ENCODE measurements at regions of chr15 and their contacts with region 1.

Region 1: DNA sequence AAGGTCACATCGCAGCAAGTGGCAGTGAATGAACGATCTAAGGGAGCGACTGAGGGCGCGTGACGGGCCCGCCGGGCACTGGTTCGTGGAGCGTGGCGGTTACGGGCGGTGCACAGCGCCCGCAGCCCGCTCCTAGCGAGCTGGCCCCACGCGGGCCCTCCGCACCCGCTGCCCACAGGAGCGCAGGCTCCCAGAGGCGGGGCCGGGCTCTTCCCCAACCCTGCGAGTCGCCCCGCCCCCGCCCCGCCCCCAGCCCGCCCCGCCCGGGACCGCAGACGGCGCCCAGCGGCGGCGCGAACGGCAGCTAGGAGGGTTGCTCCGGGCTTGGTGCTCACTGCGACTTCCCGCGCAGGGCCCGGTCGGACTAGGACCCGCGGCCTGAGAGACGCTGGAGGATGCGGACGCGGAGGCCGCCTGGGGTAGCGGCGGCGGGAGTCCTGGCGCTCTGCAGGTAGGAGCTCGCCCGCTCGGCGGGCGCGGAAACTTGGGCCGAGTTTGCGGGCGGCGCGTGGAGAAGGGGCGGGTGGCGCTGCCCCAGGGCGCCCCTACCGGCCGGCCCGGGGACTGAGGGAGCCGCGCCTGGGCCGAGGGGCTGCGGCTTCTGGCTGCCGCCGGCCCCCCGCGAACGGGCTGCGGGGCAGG is at the start of gene C15orf39:
- DNase-seq: peak; percentile 76 to 91 (median 81)
- ATAC-seq: peak; percentile 32 to 83 (median 66)
- H3K4me3 ChIP-seq: peak within 1 kb of the TSS; percentile 61 to 100 (median 89)
- H3K27ac ChIP-seq: peak within 1 kb of the TSS; percentile 92 to 99 (median 97)
- H3K4me1 ChIP-seq: peaks cover 0 to 78% (median 55%) of the 10 kb centered on the region in 12 donors
- H3K27me3 ChIP-seq: no peaks in the 10 kb centered on the region
- CTCF ChIP-seq: peak; percentile 71 to 97 (median 94)
- POLR2A ChIP-seq: peak; percentile 84 to 96
- total RNA-seq, gene C15orf39: 10.0 to 26.1 (median 13.9) TPM

Region 2: GRCh38 chr15:74937596-74938296 is 264.0 kb before region 1 on chr15 and contains the start of gene COX5A:
- intact Hi-C with region 1: loop called in 1 of 10 experiments (anchors 5 kb)
- DNase-seq: peak; percentile 95 to 97 (median 96)
- ATAC-seq: peak; percentile 92 to 99 (median 96)
- H3K4me3 ChIP-seq: peak within 1 kb of the TSS; percentile 67 to 100 (median 96)
- H3K27ac ChIP-seq: peak within 1 kb of the TSS; percentile 93 to 99 (median 99)
- H3K4me1 ChIP-seq: peaks cover 0 to 45% (median 34%) of the 10 kb centered on the region in 12 donors
- H3K27me3 ChIP-seq: no peaks in the 10 kb centered on the region
- CTCF ChIP-seq: peak in 1 of 12 donors; percentile 5
- POLR2A ChIP-seq: peak in 1 of 2 donors; percentile 92
- total RNA-seq, gene COX5A: 754 to 1,537 (median 1,120) TPM

Region 3: GRCh38 chr15:74956648-74957300 is 245.0 kb before region 1 on chr15 and contains the start of gene RPP25:
- intact Hi-C with region 1: loop called in 3 of 10 experiments (anchors 10 kb)
- DNase-seq: peak; percentile 74 to 90 (median 78)
- ATAC-seq: peak; percentile 73 to 91 (median 88)
- H3K4me3 ChIP-seq: peak within 1 kb of the TSS; percentile 23 to 73 (median 58)
- H3K27ac ChIP-seq: peak within 1 kb of the TSS; percentile 47 to 85 (median 76)
- H3K4me1 ChIP-seq: peaks cover 0 to 58% (median 37%) of the 10 kb centered on the region in 12 donors
- H3K27me3 ChIP-seq: peaks cover 0 to 27% (median 10%) of the 10 kb centered on the region in 9 donors
- CTCF ChIP-seq: no peak
- POLR2A ChIP-seq: peak in 1 of 2 donors; percentile 82
- total RNA-seq, gene RPP25: 1.1 to 5.8 (median 2.1) TPM

Region 4: DNA sequence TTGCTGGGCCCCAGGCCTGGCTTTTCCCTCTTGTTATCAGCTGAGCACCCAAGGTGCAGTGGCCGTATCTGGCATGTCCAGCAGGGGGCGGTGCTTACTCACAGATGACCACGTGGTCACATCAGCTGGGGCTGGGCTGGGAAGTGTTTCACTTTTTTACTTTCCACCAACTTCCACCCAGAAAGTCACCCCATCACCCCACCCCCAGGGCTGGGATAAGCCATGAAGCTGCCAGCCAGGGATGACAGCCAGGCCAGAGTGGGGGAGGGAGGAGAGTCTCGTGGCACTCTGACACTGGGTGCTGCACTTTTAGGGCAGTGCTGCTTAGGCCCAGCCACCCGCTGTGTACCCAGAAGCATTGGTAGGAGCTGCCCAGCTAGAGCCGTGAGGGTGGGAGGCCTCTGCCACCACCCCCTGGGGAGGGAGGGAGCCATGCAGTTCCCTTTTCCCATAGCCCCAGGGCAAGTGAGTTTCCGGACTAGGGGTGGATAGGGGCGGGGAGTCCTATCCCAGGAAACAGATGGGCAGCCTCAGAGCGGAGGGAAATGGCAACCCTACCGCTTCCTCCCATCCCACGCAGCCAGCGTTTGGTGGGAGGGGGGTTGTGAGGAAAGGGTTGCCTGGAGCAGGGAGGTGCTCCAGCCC is 172.2 kb before region 1 on chr15:
- intact Hi-C with region 1: loop called in 8 of 10 experiments (anchors 1 to 5 kb)
- DNase-seq: peak; percentile 91 to 96 (median 92)
- ATAC-seq: peak; percentile 84 to 88 (median 86)
- H3K4me3 ChIP-seq: peak overlapping the region in 9 of 12 donors; percentile 21 to 46 (median 31)
- H3K27ac ChIP-seq: peak overlapping the region; percentile 37 to 87 (median 80)
- H3K4me1 ChIP-seq: peaks cover 9 to 72% (median 33%) of the 10 kb centered on the region in 12 donors
- H3K27me3 ChIP-seq: no peaks in the 10 kb centered on the region
- CTCF ChIP-seq: peak; percentile 90 to 96 (median 94)
- POLR2A ChIP-seq: peak in 1 of 2 donors; percentile 14

Region 5: GRCh38 chr15:75042730-75043508 is 158.8 kb before region 1 on chr15:
- intact Hi-C with region 1: loop called in 9 of 10 experiments (anchors 1 to 5 kb)
- DNase-seq: peak; percentile 84 to 92 (median 91)
- ATAC-seq: peak; percentile 60 to 68 (median 62)
- H3K4me3 ChIP-seq: peak overlapping the region in 2 of 12 donors; percentile 13 to 32
- H3K27ac ChIP-seq: peak overlapping the region; percentile 85 to 96 (median 90)
- H3K4me1 ChIP-seq: peaks cover 44 to 86% (median 58%) of the 10 kb centered on the region in 12 donors
- H3K27me3 ChIP-seq: no peaks in the 10 kb centered on the region
- CTCF ChIP-seq: peak; percentile 46 to 76 (median 64)
- POLR2A ChIP-seq: no peak

Region 6: DNA sequence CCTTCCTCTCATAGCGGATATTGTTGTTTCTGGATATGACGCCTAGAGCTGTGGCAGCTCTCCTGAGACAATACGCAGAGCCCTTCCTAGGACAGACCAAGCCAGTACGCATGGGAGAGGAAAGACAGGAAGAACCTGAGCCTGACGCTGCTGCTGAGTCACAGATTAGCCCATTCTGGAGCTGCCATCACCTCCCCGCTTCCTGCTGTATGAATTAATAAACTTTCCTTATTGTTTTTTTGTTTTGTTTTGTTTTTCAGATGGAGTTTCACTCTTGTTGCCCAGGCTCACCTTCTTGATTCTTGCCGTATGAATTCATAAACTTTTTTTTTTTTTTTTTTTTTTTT is 111.4 kb before region 1 on chr15:
- intact Hi-C with region 1: no loop called
- DNase-seq: peak in 4 of 5 donors; percentile 67 to 78 (median 72)
- ATAC-seq: peak; percentile 88 to 98 (median 96)
- H3K4me3 ChIP-seq: peak overlapping the region in 1 of 12 donors; percentile 15
- H3K27ac ChIP-seq: peak overlapping the region; percentile 68 to 91 (median 82)
- H3K4me1 ChIP-seq: peaks cover 0 to 11% (median 5%) of the 10 kb centered on the region in 12 donors
- H3K27me3 ChIP-seq: no peaks in the 10 kb centered on the region
- CTCF ChIP-seq: no peak
- POLR2A ChIP-seq: no peak

Region 7: GRCh38 chr15:75126001-75126400 is 75.7 kb before region 1 on chr15:
- intact Hi-C with region 1: loop called in 1 of 10 experiments (anchors 5 kb)
- DNase-seq: no peak
- ATAC-seq: no peak
- H3K4me3 ChIP-seq: no peak overlapping the region
- H3K27ac ChIP-seq: peak overlapping the region in 1 of 12 donors; percentile 66
- H3K4me1 ChIP-seq: peaks cover 0 to 53% (median 11%) of the 10 kb centered on the region in 12 donors
- H3K27me3 ChIP-seq: no peaks in the 10 kb centered on the region
- CTCF ChIP-seq: no peak
- POLR2A ChIP-seq: no peak

Region 8: GRCh38 chr15:75335705-75336355 is 134.1 kb after region 1 on chr15 and contains the start of gene COMMD4:
- intact Hi-C with region 1: loop called in 1 of 10 experiments (anchors 10 kb)
- DNase-seq: peak; percentile 96 to 98 (median 96)
- ATAC-seq: peak; percentile 89 to 96 (median 94)
- H3K4me3 ChIP-seq: peak within 1 kb of the TSS; percentile 27 to 90 (median 71)
- H3K27ac ChIP-seq: peak within 1 kb of the TSS in 11 of 12 donors; percentile 14 to 77 (median 68)
- H3K4me1 ChIP-seq: peaks cover 0 to 16% (median 13%) of the 10 kb centered on the region in 12 donors
- H3K27me3 ChIP-seq: no peaks in the 10 kb centered on the region
- CTCF ChIP-seq: peak in 1 of 12 donors; percentile 7
- POLR2A ChIP-seq: peak in 1 of 2 donors; percentile 47
- total RNA-seq, gene COMMD4: 23.9 to 66.9 (median 35.7) TPM

Region 9: DNA sequence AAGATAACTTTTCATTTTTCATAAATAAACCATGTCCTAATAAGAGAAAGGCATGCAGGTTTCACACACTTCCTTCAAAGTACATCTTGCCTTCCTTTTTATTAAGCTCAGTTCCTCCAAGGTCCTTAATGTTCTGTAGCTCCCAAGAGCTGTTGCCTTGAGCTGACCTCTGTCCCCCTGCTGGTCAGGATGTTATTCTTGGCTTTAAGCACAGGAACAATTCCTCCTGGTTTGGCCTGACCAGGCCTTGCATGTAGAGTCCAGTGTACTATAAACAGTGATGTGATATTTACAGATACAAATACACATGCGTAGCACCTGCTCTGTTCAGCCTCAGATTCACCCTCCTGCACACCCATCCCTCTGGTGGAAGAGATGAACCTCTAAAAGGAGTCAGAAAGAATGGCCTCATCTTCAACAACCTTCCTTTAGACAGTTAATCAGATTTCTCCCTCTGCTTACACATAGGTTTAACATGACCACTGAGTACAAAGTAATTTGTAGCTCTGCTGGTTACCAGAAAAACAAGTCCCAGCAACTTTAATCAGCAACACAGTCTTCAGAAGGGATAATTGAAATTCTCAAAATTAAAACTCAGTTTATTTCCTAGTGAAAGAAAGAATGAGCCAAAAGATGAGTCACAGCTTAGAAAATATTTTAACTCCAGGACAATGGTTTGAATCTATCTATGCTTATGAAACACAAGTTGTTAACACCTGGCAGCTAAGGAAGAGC is 330.9 kb after region 1 on chr15:
- intact Hi-C with region 1: no loop called
- DNase-seq: peak; percentile 63 to 82 (median 70)
- ATAC-seq: peak; percentile 90 to 97 (median 96)
- H3K4me3 ChIP-seq: no peak overlapping the region
- H3K27ac ChIP-seq: peak overlapping the region; percentile 53 to 82 (median 72)
- H3K4me1 ChIP-seq: peaks cover 0 to 45% (median 31%) of the 10 kb centered on the region in 12 donors
- H3K27me3 ChIP-seq: no peaks in the 10 kb centered on the region
- CTCF ChIP-seq: peak; percentile 30 to 64 (median 50)
- POLR2A ChIP-seq: no peak

Measured in heart left ventricle (tissue), 16 donors.